Left ventricle myocardium superior (tissue), 1 donor: ENCODE measurements at regions of chr1 and their contacts with region 1.

Region 1: DNA sequence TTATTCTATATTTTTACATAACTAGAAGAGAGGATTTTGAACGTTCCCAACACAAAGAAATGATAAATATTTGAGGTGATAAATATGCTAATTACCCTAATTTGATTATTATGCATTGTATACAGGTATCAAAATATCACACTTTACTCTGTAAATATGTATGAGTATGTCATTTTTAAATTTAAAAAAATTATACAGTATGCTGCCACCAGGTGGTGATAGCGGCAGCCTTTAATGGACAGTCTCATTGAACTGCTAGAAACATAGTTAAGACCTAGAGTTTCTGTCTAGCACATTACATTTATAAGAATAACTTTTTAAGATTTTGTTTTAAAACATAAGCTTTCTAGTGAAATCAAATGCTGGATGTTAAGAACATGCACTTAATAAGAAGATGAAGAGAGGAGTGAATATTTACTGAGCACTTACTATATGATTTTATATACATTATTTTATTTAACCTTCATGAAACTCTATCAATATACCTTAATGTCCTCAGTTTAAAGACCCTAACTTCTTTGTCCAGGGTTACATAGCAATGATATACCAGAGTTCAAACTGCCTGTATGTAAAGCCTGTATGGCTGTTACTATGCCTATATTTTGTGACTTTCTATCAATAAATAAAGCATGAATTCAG is 207.1 kb downstream of the NUF2 start:
- DNase-seq: no peak
- ATAC-seq: no peak

Region 2: GRCh38 chr1:165073185-165074007 is 1544.6 kb after region 1 on chr1:
- intact Hi-C with region 1: loop called (anchors 10 kb)
- DNase-seq: no peak
- ATAC-seq: peak; percentile 76